Sciatic nerve (tissue), 2 donors: ENCODE measurements at regions of chr14 and their contacts with region 1.

Region 1: GRCh38 chr14:95442633-95443021 is 73.8 kb downstream of the SYNE3 start:
- DNase-seq: peak; percentile 92
- ATAC-seq: peak; percentile 94

Region 2: DNA sequence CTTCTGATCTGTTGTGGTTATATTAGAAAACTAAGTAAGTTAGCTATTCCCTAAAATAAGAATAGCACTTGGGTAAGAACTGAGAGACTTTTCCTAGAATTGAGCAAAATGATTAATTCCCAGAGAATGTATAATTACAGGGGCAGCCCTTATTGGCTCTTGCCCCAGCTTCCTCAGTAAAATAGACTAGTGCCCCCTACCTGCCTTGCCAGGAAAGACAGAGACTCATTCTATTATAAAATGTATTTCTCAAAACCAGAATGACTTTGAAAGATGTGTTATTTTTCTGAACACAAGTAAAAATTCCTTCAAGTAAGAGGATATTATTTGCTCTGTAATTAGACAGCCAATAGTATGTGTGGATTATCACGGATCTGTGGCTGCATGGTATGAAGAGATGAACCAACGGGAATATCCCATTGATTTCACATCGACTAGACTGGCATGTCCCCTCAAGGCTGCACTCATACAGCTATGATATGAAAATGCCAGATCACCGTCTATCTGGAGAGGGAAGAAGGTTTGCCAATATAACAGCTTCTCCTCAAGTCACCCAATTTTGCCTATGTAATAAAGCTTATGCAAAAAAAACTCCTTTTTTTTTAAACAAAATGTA is 84.9 kb after region 1 on chr14:
- intact Hi-C with region 1: loop called (anchors 5 kb)
- DNase-seq: peak; percentile 79
- ATAC-seq: peak; percentile 88

Region 3: GRCh38 chr14:95561001-95561412 is 118.4 kb after region 1 on chr14:
- intact Hi-C with region 1: no loop called
- DNase-seq: peak; percentile 91
- ATAC-seq: peak; percentile 85

Region 4: DNA sequence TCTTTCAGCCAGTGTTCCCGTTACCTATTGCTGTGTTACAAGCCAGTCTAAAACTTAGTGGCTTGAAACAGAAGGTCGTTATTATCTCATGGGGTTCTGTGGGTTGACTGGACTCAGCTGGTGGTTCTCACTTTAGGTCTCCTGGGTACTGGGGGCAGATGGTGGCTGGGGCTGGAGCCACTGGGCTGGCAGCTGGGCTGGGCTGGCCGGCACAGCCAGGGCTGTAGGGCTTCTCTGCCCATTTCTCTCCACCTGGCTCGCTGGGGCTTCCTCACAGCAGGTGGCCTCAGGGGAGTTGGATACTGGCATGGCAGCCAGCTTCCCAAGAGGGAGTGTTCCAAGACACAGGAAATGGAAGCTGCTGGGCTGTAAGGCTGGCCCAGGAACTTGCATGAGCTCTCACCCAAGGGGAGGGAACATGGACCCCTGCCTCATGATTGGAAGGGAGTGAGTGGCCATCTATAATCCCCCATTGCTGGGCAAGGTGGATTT is 461.0 kb after region 1 on chr14:
- intact Hi-C with region 1: no loop called
- DNase-seq: no peak
- ATAC-seq: no peak